ENCODE measurements at regions of chr17 and their contacts with region 1.

Region 1: GRCh38 chr17:59435238-59435637 is 103.8 kb downstream of the YPEL2 start:
- DNase-seq: no peak
- ATAC-seq: no peak
- H3K4me3 ChIP-seq: no peak overlapping the region
- H3K27ac ChIP-seq: no peak overlapping the region
- H3K4me1 ChIP-seq: peaks cover 0 to 52% of the 10 kb centered on the region in 2 donors
- H3K27me3 ChIP-seq: no peaks in the 10 kb centered on the region
- CTCF ChIP-seq: no peak

Region 2: GRCh38 chr17:59329638-59330313 is 105.5 kb before region 1 on chr17:
- intact Hi-C with region 1: loop called (anchors 5 to 10 kb)
- DNase-seq: peak in 3 of 4 donors; percentile 63 to 86 (median 77)
- ATAC-seq: peak; percentile 57
- H3K4me3 ChIP-seq: no peak overlapping the region
- H3K27ac ChIP-seq: peak overlapping the region; percentile 84 to 85
- H3K4me1 ChIP-seq: peaks cover 14 to 55% of the 10 kb centered on the region in 2 donors
- H3K27me3 ChIP-seq: no peaks in the 10 kb centered on the region
- CTCF ChIP-seq: peak; percentile 74 to 83